B cell (primary cell): ENCODE measurements at regions of chr1 and their contacts with region 1.

Region 1: DNA sequence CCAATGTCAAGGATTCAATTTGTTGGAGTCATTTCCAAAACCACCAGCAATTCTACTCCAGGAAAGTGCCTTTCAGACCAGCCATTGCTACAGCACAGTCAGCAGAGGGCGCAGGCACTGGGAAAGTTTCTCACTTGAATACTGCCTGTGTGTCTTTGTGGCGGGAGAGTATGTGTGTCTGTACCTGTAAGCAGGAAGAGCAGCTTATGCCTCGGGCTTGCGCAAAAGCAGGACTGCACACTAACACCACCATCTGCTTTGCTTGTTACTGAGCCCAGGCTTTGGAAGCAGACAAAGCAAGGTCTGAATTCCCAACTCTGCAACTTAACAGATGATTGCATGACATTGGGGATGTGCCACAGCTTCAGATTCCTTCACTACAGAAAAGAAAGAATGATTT is 7.0 kb upstream of the CTSE start:
- DNase-seq: peak; percentile 85
- ATAC-seq: peak; percentile 84
- H3K4me3 ChIP-seq: peak overlapping the region in 2 of 5 experiments; percentile 3 to 38
- H3K4me3 Mint-ChIP-seq: peak overlapping the region; percentile 73
- H3K27ac ChIP-seq: no peak overlapping the region
- H3K27ac Mint-ChIP-seq: peak overlapping the region; percentile 46
- H3K4me1 ChIP-seq: peaks cover 38 to 42% of the 10 kb centered on the region in 2 donors
- H3K4me1 Mint-ChIP-seq: peaks cover 46% of the 10 kb centered on the region
- H3K27me3 ChIP-seq: no peaks in the 10 kb centered on the region
- H3K27me3 Mint-ChIP-seq: no peaks in the 10 kb centered on the region
- CTCF ChIP-seq: peak; percentile 92

Region 2: DNA sequence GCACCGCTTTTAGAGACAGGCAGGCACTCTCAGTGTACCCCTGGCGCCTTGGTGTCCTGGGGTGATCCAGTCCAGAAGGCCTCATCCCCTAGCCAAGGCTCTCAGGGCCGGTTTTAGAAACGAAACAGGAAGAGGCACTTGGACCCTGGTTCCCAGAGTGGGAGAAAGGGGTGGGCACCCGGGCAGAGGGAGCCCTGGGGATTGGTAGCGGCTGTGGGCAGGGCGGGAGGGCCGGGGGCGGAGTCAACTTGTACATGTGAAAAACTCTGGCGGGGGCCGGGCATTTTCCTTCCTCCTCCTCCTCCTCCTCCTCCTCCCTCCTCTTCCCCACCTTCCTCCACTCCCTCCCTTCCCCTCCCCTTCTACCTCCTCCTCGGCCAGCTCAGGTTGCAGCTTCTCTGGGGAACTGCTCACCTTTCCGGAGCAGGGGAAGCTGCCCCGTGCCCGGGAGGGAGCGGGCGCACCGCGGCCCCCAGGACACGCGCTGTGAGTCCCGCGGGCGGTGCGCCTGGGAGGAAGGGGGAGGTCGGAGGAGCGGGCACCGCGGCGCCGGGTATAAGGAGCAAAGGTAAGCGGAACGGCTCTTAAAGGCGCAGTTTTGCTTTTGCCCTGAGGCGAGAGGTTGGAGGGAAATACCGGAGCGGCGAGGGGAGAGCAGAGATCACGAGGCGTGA is 526.3 kb before region 1 on chr1 and contains the start of gene CDK18:
- CTCF ChIA-PET with region 1: no interaction called
- POLR2A ChIA-PET with region 1: no interaction called
- intact Hi-C with region 1: no loop called
- DNase-seq: peak; percentile 67
- ATAC-seq: peak; percentile 71
- H3K4me3 ChIP-seq: peak within 1 kb of the TSS; percentile 36 to 81 (median 62)
- H3K4me3 Mint-ChIP-seq: peak within 1 kb of the TSS; percentile 84
- H3K27ac ChIP-seq: no peak within 1 kb of the TSS
- H3K27ac Mint-ChIP-seq: peak within 1 kb of the TSS; percentile 63
- H3K4me1 ChIP-seq: peaks cover 8 to 12% of the 10 kb centered on the region in 2 donors
- H3K4me1 Mint-ChIP-seq: peaks cover 13% of the 10 kb centered on the region
- H3K27me3 ChIP-seq: peaks cover 0 to 10% (median 2%) of the 10 kb centered on the region in 4 experiments
- H3K27me3 Mint-ChIP-seq: peaks cover 3% of the 10 kb centered on the region
- CTCF ChIP-seq: no peak
- total RNA-seq, gene CDK18: 3.7 and 4.7 TPM in 2 replicates

Region 3: DNA sequence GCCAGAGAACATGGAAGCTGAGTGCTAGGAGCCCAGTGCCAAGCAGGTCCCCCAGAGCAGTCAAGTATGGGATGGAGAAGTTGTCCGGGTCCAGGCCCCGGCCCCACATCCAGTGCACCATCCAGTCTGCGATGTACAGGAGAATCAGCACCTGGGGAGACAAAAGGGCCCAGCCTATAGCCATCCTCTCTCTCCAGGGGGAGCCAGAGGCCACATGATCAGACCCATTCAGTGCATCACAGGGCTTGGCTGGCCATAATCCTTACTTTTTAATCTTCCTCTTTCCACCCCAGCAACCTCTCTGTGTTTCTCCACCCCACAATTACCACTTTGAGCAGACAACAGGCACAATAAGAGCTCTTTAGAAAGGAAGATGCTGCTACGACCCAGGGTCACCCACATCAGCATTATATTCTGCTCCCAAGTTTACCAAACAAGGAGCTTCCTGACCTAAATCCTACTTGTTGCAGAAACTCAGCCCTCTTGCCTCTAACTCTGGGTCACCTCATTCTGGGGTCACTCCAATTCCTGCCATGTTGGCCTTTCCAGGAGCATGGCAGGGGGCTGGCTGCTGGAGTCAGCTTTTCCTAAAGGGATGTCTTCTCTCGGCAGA is 239.0 kb before region 1 on chr1:
- CTCF ChIA-PET with region 1: interaction called, 15 read pairs
- POLR2A ChIA-PET with region 1: no interaction called
- intact Hi-C with region 1: no loop called
- DNase-seq: peak; percentile 74
- ATAC-seq: peak; percentile 82
- H3K4me3 ChIP-seq: no peak overlapping the region
- H3K4me3 Mint-ChIP-seq: no peak overlapping the region
- H3K27ac ChIP-seq: no peak overlapping the region
- H3K27ac Mint-ChIP-seq: peak overlapping the region; percentile 42
- H3K4me1 ChIP-seq: peaks cover 5 to 27% of the 10 kb centered on the region in 2 donors
- H3K4me1 Mint-ChIP-seq: peaks cover 27% of the 10 kb centered on the region
- H3K27me3 ChIP-seq: no peaks in the 10 kb centered on the region
- H3K27me3 Mint-ChIP-seq: no peaks in the 10 kb centered on the region
- CTCF ChIP-seq: peak; percentile 82

Region 4: GRCh38 chr1:205907794-205908193 is 122.9 kb before region 1 on chr1:
- CTCF ChIA-PET with region 1: no interaction called
- POLR2A ChIA-PET with region 1: no interaction called
- intact Hi-C with region 1: no loop called
- DNase-seq: no peak
- ATAC-seq: no peak
- H3K4me3 ChIP-seq: no peak overlapping the region
- H3K4me3 Mint-ChIP-seq: no peak overlapping the region
- H3K27ac ChIP-seq: no peak overlapping the region
- H3K27ac Mint-ChIP-seq: no peak overlapping the region
- H3K4me1 ChIP-seq: no peaks in the 10 kb centered on the region
- H3K4me1 Mint-ChIP-seq: peaks cover 6% of the 10 kb centered on the region
- H3K27me3 ChIP-seq: no peaks in the 10 kb centered on the region
- H3K27me3 Mint-ChIP-seq: no peaks in the 10 kb centered on the region
- CTCF ChIP-seq: no peak

Region 5: GRCh38 chr1:205983925-205984725 is 46.6 kb before region 1 on chr1:
- CTCF ChIA-PET with region 1: interaction called, 75 read pairs
- POLR2A ChIA-PET with region 1: interaction called, 4 read pairs
- intact Hi-C with region 1: loop called (anchors 1 kb)
- DNase-seq: peak; percentile 62
- ATAC-seq: peak; percentile 80
- H3K4me3 ChIP-seq: no peak overlapping the region
- H3K4me3 Mint-ChIP-seq: no peak overlapping the region
- H3K27ac ChIP-seq: no peak overlapping the region
- H3K27ac Mint-ChIP-seq: no peak overlapping the region
- H3K4me1 ChIP-seq: no peaks in the 10 kb centered on the region
- H3K4me1 Mint-ChIP-seq: no peaks in the 10 kb centered on the region
- H3K27me3 ChIP-seq: no peaks in the 10 kb centered on the region
- H3K27me3 Mint-ChIP-seq: no peaks in the 10 kb centered on the region
- CTCF ChIP-seq: peak; percentile 67

Region 6: GRCh38 chr1:206050655-206051235 is 20.0 kb after region 1 on chr1:
- CTCF ChIA-PET with region 1: interaction called, 122 read pairs
- POLR2A ChIA-PET with region 1: interaction called, 7 read pairs
- intact Hi-C with region 1: loop called (anchors 1 kb)
- DNase-seq: peak; percentile 96
- ATAC-seq: peak; percentile 93
- H3K4me3 ChIP-seq: peak overlapping the region in 1 of 5 experiments; percentile 42
- H3K4me3 Mint-ChIP-seq: peak overlapping the region; percentile 91
- H3K27ac ChIP-seq: peak overlapping the region; percentile 91 to 93
- H3K27ac Mint-ChIP-seq: peak overlapping the region; percentile 99
- H3K4me1 ChIP-seq: peaks cover 71 to 80% of the 10 kb centered on the region in 2 donors
- H3K4me1 Mint-ChIP-seq: peaks cover 89% of the 10 kb centered on the region
- H3K27me3 ChIP-seq: no peaks in the 10 kb centered on the region
- H3K27me3 Mint-ChIP-seq: no peaks in the 10 kb centered on the region
- CTCF ChIP-seq: peak; percentile 57

Region 7: GRCh38 chr1:206075786-206076755 is 45.4 kb after region 1 on chr1:
- CTCF ChIA-PET with region 1: interaction called, 24 read pairs
- POLR2A ChIA-PET with region 1: interaction called, 3 read pairs
- intact Hi-C with region 1: no loop called
- DNase-seq: no peak
- ATAC-seq: no peak
- H3K4me3 ChIP-seq: no peak overlapping the region
- H3K4me3 Mint-ChIP-seq: no peak overlapping the region
- H3K27ac ChIP-seq: no peak overlapping the region
- H3K27ac Mint-ChIP-seq: no peak overlapping the region
- H3K4me1 ChIP-seq: peaks cover 11 to 14% of the 10 kb centered on the region in 2 donors
- H3K4me1 Mint-ChIP-seq: peaks cover 26% of the 10 kb centered on the region
- H3K27me3 ChIP-seq: no peaks in the 10 kb centered on the region
- H3K27me3 Mint-ChIP-seq: no peaks in the 10 kb centered on the region
- CTCF ChIP-seq: no peak

Region 8: GRCh38 chr1:206116191-206116872 is 85.6 kb after region 1 on chr1:
- CTCF ChIA-PET with region 1: interaction called, 682 read pairs
- POLR2A ChIA-PET with region 1: no interaction called
- intact Hi-C with region 1: no loop called
- DNase-seq: no peak
- ATAC-seq: no peak
- H3K4me3 ChIP-seq: no peak overlapping the region
- H3K4me3 Mint-ChIP-seq: peak overlapping the region; percentile 88
- H3K27ac ChIP-seq: no peak overlapping the region
- H3K27ac Mint-ChIP-seq: peak overlapping the region; percentile 27
- H3K4me1 ChIP-seq: peaks cover 14% of the 10 kb centered on the region in 2 donors
- H3K4me1 Mint-ChIP-seq: peaks cover 19% of the 10 kb centered on the region
- H3K27me3 ChIP-seq: peaks cover 0 to 13% (median 5%) of the 10 kb centered on the region in 4 experiments
- H3K27me3 Mint-ChIP-seq: peaks cover 23% of the 10 kb centered on the region
- CTCF ChIP-seq: no peak